ENCODE measurements at regions of chr2 and their contacts with region 1.

Region 1: GRCh38 chr2:66461664-66462500 is 27.0 kb downstream of the MEIS1 start:
- DNase-seq: no peak
- H3K4me3 ChIP-seq: no peak overlapping the region
- H3K27ac ChIP-seq: no peak overlapping the region
- H3K4me1 ChIP-seq: peaks cover 4 to 83% (median 43%) of the 10 kb centered on the region in 4 donors
- H3K27me3 ChIP-seq: no peaks in the 10 kb centered on the region
- CTCF ChIP-seq: no peak
- EP300 ChIP-seq: no peak
- POLR2A ChIP-seq: no peak

Region 2: GRCh38 chr2:66515743-66516142 is 53.9 kb after region 1 on chr2:
- intact Hi-C with region 1: loop called (anchors 10 kb)
- DNase-seq: peak in 1 of 2 donors; percentile 74
- H3K4me3 ChIP-seq: no peak overlapping the region
- H3K27ac ChIP-seq: peak overlapping the region in 1 of 5 donors; percentile 3
- H3K4me1 ChIP-seq: peaks cover 0 to 40% (median 20%) of the 10 kb centered on the region in 4 donors
- H3K27me3 ChIP-seq: no peaks in the 10 kb centered on the region
- CTCF ChIP-seq: no peak
- EP300 ChIP-seq: no peak
- POLR2A ChIP-seq: no peak